ENCODE measurements at regions of chr19 and their contacts with region 1.

Region 1: GRCh38 chr19:49823472-49823871 is 5.4 kb downstream of the MED25 start:
- DNase-seq: no peak
- ATAC-seq: no peak

Region 2: GRCh38 chr19:49847731-49848696 is 24.5 kb after region 1 on chr19:
- intact Hi-C with region 1: loop called (anchors 1 kb)
- DNase-seq: no peak
- ATAC-seq: no peak

Region 3: DNA sequence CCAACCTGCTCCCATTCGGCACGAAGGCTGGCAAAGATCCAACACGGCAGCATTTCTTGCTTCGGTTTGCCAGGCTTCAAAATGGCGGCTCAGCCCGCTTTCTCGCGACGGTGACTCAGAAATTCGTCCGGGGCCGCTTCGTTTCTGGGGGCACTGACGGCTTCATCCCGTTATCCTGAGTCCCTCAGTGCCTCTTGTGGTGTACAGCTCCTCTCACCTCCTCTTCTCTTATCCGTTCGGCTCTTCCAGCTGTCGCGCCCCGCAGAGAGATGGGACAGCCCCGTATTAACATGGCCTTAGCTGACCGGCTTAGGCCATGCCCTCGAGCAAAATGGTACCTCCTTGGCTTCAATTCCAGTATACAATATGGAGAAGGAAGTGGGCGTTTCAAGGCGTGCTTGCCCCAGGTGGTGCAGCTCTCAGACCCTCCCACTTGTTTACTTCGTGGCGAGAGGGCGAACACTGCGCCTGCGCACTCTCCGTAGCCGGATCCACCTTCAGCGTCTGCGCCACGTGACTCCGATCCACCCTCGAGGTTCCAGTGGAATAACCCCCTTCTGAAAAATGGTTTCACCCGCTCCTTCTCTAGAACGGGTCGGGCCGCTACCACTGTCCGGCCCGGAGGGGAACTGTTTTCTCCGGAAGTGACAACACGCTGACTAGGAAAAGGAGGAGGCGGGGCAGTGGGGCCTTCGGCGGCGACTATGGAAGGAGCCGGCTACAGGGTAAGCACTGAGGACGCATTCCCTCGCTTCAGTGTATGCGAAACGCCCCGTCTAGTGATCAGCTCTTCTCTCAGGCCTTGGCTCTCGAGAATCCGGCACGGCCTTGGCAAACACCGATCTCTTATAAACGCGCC is 53.8 kb after region 1 on chr19 and contains the starts of genes AKT1S1 and TBC1D17:
- intact Hi-C with region 1: no loop called
- DNase-seq: peak; percentile 99
- ATAC-seq: peak; percentile 87
- total RNA-seq, gene AKT1S1: 36.6 TPM
- total RNA-seq, gene TBC1D17: 64.8 TPM

Region 4: GRCh38 chr19:49929611-49930482 is 106.4 kb after region 1 on chr19:
- intact Hi-C with region 1: no loop called
- DNase-seq: peak; percentile 96
- ATAC-seq: peak; percentile 94